Activated T-helper 1 cell treated with anti-CD3 and anti-CD28 coated beads, Interleukin-12 subunit alpha, Interleukin-12 subunit beta, Interleukin-2, Interleukin-4 antibody, amounts not matched to agents 30 ng/mL and 10 ng/mL and 1 ng/mL, durations not matched to agents 14 hours and 24 hours and 36 hours (primary cell): ENCODE measurements at regions of chr1 and their contacts with region 1.

Region 1: DNA sequence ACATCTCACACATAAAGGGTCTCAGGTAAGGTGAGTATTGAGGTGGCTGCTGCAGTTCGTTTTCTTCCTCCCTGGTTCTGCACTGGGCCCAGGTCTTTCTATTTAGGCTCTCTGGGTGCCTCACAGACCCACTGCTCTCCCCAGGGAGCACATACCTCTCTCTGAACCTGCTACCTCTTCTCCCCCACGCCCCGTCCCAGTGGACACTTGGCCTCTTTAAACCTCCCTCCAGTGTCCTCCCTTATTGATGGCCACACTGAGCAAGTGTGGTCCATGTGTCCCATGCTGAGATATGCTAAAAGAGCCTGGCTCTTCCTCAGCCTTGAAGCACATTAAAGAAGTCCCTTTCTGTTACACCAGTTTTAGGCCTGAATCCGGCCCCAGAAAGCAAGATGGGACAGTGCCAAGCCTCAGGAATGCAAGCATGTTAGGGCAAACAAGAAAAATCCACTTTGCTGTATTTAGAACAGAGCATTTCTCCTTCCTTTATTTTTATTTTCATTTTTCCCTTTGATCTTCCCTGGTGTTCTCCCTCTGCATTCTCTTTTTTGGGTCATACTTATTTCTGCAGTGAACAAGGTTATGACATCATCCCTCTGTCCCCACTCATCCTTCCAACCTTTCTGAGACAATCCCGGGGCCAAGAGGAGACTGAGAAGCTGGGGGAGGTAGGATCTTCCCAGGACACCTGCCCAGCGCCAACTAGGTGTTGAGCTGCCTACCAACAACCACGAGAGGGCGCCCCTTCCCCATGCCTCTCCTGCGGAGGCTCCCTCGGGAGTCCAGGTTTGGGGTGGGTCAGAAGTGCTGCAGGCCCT is 5.0 kb upstream of the CHI3L2 start:
- DNase-seq: peak; percentile 69
- H3K4me3 Mint-ChIP-seq: peak overlapping the region; percentile 78
- H3K27ac Mint-ChIP-seq: peak overlapping the region; percentile 98
- H3K4me1 Mint-ChIP-seq: peaks cover 93% of the 10 kb centered on the region
- H3K27me3 Mint-ChIP-seq: no peaks in the 10 kb centered on the region

Region 2: DNA sequence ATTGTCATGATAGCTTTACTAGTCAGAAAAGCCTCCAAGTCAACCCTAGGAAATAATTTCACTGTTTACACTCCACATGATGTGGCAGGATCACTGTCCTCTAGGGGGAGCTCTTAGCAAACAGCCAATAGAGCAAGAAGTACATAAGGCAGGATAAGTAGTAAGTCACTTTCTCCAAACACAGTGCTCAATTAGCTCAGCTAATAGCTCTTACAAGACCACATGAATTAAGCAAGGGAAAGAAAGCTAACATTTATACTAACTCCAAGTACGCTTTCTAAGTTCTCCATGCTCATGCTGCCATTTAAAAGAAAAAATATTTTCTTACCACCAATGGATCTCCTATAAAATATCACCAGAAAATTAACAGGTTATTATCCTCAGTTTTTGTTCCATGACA is 191.9 kb before region 1 on chr1:
- intact Hi-C with region 1: loop called (anchors 5 kb)
- DNase-seq: peak; percentile 49
- H3K4me3 Mint-ChIP-seq: no peak overlapping the region
- H3K27ac Mint-ChIP-seq: no peak overlapping the region
- H3K4me1 Mint-ChIP-seq: no peaks in the 10 kb centered on the region
- H3K27me3 Mint-ChIP-seq: peaks cover 18% of the 10 kb centered on the region

Region 3: GRCh38 chr1:111085676-111086075 is 136.8 kb before region 1 on chr1:
- intact Hi-C with region 1: no loop called
- DNase-seq: no peak
- H3K4me3 Mint-ChIP-seq: no peak overlapping the region
- H3K27ac Mint-ChIP-seq: no peak overlapping the region
- H3K4me1 Mint-ChIP-seq: no peaks in the 10 kb centered on the region
- H3K27me3 Mint-ChIP-seq: peaks cover 19% of the 10 kb centered on the region

Region 4: DNA sequence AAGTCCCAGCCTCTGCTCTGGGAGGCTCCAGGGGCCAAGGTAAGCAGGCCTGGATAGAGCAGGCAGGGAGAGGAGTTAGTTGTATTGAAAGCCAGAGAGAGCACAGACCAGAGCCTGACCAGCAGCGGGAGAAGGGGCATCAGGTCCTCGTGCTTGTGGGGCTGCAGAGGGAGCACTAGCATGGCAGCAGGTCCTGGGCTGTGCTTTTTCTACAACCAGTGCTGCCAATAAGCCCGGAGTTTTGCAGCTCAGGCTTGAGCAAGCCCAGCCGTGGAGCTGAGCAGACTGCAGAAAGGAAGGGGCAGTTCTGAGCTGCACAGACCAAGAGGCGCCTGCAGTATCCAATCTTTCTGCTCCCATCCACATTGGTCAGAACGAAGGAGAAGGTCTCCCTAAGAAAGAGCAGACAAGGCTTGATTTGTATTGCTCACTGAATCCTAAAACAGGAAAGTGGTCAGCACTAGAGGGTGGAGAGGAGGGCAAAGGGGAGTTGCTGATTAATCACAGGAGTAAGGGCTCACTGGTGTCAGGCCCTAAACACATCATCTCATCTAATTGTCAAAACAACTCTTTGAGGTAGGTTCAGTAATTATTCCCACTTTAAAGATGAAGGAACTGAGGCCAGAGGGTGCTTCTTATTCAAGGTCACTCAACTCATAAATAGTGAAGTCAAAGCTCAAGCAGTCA is 24.8 kb before region 1 on chr1:
- intact Hi-C with region 1: loop called (anchors 1 kb)
- DNase-seq: no peak
- H3K4me3 Mint-ChIP-seq: peak overlapping the region; percentile 100
- H3K27ac Mint-ChIP-seq: peak overlapping the region; percentile 99
- H3K4me1 Mint-ChIP-seq: peaks cover 81% of the 10 kb centered on the region
- H3K27me3 Mint-ChIP-seq: no peaks in the 10 kb centered on the region

Region 5: DNA sequence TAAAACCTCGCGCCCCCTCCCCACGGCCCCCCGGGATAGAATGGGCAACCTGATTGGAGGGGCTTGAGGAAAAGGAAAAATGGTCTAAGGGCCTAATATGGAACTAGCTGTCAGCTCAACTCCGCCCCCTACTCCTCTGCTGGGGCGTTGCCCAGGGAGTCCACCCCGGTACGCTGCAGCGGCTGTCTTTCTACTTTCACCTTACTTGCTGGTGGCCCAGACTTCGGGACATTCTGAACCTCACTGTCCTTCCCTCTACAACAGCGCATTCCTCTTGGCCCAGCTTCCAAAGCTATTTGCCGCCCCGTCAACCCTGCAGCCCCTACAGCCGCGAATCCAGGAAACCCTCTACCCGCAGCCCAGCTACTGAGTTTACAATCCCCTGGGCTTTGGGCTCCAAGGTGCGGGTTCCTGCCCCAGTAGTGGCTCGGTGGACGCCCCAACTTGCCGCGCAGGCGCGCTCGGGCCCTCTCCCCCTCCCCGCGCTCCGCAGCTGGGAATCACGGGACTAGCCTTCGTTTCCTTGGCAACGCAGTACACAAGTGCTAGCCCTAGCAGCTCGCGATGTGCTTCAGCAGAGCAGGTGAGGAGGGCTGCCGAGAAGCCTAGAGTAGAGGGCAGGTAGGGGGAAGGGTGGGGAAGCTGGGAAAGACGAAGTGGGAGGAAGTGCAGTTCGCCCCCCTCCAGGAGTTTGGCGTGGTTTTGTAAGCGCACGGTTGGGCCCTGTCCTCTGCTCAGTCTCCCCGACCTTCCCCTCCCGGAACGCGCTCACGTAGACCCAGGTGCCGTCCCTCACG is 123.8 kb after region 1 on chr1:
- intact Hi-C with region 1: loop called (anchors 5 kb)
- DNase-seq: peak; percentile 78
- H3K4me3 Mint-ChIP-seq: peak overlapping the region; percentile 85
- H3K27ac Mint-ChIP-seq: peak overlapping the region; percentile 40
- H3K4me1 Mint-ChIP-seq: peaks cover 23% of the 10 kb centered on the region
- H3K27me3 Mint-ChIP-seq: peaks cover 6% of the 10 kb centered on the region

Region 6: GRCh38 chr1:111448918-111449702 is 226.6 kb after region 1 on chr1 and contains the starts of genes ATP5PB and WDR77:
- intact Hi-C with region 1: loop called (anchors 1 kb)
- DNase-seq: peak; percentile 91
- H3K4me3 Mint-ChIP-seq: peak within 1 kb of the TSS; percentile 100
- H3K27ac Mint-ChIP-seq: peak within 1 kb of the TSS; percentile 96
- H3K4me1 Mint-ChIP-seq: peaks cover 74% of the 10 kb centered on the region
- H3K27me3 Mint-ChIP-seq: no peaks in the 10 kb centered on the region
- total RNA-seq, gene ATP5PB: 280 and 282 TPM in 2 replicates
- total RNA-seq, gene WDR77: 61.3 and 62.5 TPM in 2 replicates

Region 7: DNA sequence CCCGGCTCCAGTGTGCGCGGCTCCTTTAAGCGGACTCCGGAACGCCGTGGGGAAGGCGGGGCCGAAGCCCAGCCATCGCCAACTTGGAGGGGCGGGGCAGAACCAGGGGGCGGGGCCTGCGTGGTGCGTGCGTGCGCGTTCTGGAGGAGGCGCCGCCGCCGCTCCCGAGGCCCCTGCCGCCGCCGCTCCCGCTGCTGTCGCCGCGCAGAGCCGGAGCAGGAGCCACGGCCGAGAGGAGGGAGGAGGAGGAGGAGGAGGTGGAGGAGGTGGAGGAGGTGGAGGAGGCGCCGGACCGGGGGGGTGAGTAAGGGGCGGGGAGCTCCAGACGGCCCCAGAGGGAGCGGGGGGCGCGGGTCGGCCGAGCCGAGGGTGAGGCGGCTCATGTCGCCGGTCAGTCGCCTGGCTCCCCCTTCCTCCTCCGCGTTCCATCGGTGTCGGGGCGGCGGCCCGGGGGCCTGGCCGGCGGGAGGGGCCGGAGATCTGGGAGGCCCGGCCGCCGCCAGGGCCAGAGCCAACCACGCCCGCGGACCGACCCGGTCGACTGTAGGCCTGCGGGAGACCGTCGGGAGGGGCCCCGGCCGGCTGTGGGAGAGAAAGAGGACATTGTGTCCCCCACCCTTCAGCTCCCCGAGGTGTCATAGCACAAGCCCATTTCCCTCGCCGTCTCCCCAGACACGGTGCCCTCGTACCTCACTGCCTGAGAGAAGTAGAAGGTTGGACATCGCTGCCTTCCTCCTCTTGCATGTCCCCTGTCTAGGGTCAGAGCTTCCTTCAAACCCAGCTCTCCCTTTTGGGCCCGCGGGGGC is 397.3 kb after region 1 on chr1 and contains the start of gene RAP1A:
- intact Hi-C with region 1: loop called (anchors 5 kb)
- DNase-seq: peak; percentile 88
- H3K4me3 Mint-ChIP-seq: peak within 1 kb of the TSS; percentile 99
- H3K27ac Mint-ChIP-seq: peak within 1 kb of the TSS; percentile 93
- H3K4me1 Mint-ChIP-seq: peaks cover 76% of the 10 kb centered on the region
- H3K27me3 Mint-ChIP-seq: no peaks in the 10 kb centered on the region
- total RNA-seq, gene RAP1A: 326 and 348 TPM in 2 replicates